ENCODE measurements at regions of chr1 and their contacts with region 1.

Region 1: DNA sequence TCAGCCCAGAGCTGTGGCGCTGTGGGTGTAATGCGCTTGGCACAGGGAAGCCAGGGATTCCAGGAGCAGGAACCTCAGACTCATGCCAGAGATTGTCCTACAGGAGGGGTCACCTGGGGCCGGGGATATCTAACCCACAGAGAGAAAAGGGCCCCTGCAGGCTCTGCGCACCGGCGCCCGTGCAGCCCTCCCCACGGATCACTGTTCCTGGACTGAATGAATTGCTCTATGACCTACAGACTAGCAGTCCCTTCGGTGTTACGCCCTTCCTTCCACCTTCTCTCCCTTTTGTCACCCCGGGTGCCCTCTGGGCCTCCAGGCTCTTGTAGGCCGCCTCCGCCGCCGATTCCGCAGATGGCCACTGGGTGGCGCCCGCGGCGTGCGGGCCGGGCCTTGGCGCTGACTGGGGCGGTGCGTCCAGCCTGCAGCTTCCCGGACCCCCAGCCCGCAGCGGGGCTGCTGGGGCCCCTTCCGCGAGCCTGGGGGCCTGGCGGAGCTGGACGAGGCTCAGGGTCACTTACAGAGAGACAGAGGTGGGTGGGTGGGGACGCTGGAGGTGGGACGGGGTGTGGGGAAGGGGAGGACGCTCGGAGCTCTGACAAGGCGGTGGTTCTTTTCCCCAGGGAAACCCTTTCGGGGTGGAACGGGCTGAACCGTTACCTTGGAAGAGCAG is 101.3 kb downstream of the IER5 start:
- DNase-seq: peak; percentile 89
- H3K4me3 Mint-ChIP-seq: peak overlapping the region; percentile 34
- H3K27ac Mint-ChIP-seq: no peak overlapping the region
- H3K4me1 Mint-ChIP-seq: peaks cover 8% of the 10 kb centered on the region
- H3K27me3 Mint-ChIP-seq: peaks cover 88% of the 10 kb centered on the region
- CTCF ChIP-seq: peak; percentile 98

Region 2: DNA sequence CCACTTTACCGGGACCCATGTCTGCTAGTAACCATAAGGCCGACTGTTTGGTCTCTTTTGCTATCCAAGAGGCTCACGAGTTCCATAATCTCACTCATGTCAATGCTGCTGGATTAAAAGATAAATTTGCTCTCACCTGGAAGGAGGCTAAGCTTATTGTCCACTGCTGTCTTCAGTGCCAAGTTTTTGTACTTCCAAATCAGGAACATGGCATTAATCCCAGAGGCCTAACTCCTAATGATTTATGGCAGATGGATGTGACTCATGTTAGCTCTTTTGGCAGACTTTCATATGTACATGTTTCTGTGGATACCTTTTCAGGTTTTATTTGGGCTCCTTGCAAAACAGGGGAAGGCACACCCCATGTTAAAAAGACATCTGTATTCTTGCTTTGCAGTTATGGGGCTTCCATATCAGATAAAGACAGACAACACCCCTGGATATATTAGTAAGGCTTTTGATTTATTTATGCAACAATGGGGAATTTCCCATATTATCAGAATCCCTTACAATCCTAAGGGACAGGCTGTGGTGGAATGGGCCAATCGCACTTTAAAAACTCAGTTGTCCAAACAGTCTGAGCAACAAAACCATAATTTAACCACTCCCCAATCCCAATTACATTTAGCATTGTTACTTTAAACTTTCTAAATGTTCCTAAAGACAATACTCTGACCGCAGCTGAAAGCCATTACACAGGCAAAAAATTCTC is 61.3 kb after region 1 on chr1:
- CTCF ChIA-PET with region 1: no interaction called
- intact Hi-C with region 1: loop called (anchors 5 kb)
- DNase-seq: peak; percentile 37
- H3K4me3 Mint-ChIP-seq: no peak overlapping the region
- H3K27ac Mint-ChIP-seq: no peak overlapping the region
- H3K4me1 Mint-ChIP-seq: peaks cover 46% of the 10 kb centered on the region
- H3K27me3 Mint-ChIP-seq: peaks cover 26% of the 10 kb centered on the region
- CTCF ChIP-seq: no peak

Region 3: GRCh38 chr1:181324797-181325616 is 135.2 kb after region 1 on chr1:
- CTCF ChIA-PET with region 1: no interaction called
- intact Hi-C with region 1: loop called (anchors 10 kb)
- DNase-seq: peak; percentile 73
- H3K4me3 Mint-ChIP-seq: no peak overlapping the region
- H3K27ac Mint-ChIP-seq: no peak overlapping the region
- H3K4me1 Mint-ChIP-seq: peaks cover 18% of the 10 kb centered on the region
- H3K27me3 Mint-ChIP-seq: peaks cover 27% of the 10 kb centered on the region
- CTCF ChIP-seq: no peak

Region 4: GRCh38 chr1:181424786-181425403 is 235.1 kb after region 1 on chr1:
- CTCF ChIA-PET with region 1: interaction called, 24 read pairs
- intact Hi-C with region 1: loop called (anchors 1 kb)
- DNase-seq: peak; percentile 83
- H3K4me3 Mint-ChIP-seq: peak overlapping the region; percentile 31
- H3K27ac Mint-ChIP-seq: no peak overlapping the region
- H3K4me1 Mint-ChIP-seq: peaks cover 8% of the 10 kb centered on the region
- H3K27me3 Mint-ChIP-seq: no peaks in the 10 kb centered on the region
- CTCF ChIP-seq: peak; percentile 99

Measured in Calu3 (cell line).